Activated T-helper 1 cell treated with anti-CD3 and anti-CD28 coated beads, Interleukin-12 subunit alpha, Interleukin-12 subunit beta, Interleukin-2, Interleukin-4 antibody, amounts not matched to agents 30 ng/mL and 10 ng/mL and 1 ng/mL, durations not matched to agents 14 hours and 24 hours and 36 hours (primary cell): ENCODE measurements at regions of chr14 and their contacts with region 1.

Region 1: DNA sequence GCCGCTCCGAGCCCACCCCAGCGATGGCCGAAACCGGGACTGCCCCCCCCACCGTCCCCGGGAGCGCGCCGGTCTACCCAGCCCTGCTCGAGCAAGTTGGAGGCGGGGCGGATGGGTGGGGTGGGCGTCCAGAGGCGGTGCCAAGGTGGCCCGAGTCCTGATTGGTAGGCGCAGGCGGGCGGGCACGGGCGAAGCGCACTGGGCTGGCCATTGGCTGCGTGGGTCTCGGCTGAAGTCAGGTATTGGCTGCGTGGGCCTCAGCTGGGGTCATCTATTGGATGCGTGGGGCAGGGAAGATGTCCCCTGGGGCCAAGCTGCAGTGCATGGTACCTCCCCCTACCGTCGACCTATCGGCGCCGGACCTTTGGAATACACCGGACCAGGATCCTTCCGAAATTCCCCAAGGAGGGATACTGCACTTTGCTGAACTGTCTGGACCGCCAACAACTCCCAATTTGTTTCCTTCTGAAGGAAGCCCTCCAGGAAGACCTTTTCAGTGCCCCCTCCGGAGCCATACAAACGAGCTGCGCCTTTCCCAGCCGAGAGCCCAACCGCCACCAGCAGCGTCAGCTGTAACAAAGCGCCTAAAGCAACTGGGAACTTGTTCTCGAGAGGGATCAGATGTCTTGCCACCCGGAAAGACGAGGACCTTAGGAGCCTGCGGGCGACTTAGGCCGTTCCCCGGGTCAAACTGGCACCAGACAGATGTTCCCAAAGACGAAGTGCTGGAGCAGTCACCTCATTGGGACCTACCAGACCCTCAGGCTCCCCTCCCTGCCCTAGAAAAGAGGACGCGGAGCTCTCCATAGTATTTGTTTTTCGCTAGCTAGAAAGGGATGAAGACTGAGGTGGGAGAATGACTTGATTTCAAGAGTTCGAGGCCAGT is at the start of gene HOMEZ:
- DNase-seq: peak; percentile 98
- H3K4me3 Mint-ChIP-seq: peak within 1 kb of the TSS; percentile 99
- H3K27ac Mint-ChIP-seq: peak within 1 kb of the TSS; percentile 95
- H3K4me1 Mint-ChIP-seq: peaks cover 26% of the 10 kb centered on the region
- H3K27me3 Mint-ChIP-seq: no peaks in the 10 kb centered on the region
- total RNA-seq, gene HOMEZ: 10.9 and 12.2 TPM in 2 replicates

Region 2: DNA sequence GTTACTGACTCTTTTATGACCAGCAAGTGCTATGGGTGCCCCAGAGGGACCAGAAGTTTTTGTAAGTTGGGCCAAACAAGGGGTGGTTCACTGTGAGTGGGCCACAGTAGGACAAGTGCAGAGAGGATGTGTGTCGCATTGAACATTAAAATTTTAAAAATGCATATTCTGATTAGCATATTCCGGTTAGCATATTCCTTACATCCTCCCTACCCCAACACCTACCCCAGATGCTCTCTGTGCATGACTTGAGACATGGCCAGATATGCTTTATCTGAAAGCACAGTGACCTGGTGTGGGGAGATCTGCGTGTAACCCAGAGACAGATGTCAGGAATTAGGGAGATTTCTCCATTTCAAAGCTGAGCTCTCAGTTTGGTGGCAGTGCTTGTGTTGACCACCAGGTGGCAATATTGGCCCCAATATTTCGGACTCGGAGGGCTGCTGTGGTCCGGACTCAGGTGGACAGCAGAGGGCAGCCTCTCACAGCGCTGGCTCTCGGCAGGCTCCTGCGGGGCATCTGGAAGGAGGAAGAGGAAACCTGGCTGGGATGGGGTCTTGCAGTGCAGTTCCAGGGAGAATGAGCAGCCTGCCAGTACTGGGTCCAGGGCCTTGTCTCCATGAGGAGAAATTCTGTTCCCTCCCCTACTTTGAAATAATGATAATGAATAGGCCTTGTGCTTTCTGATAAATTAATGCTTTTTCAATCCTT is 165.6 kb before region 1 on chr14:
- intact Hi-C with region 1: loop called (anchors 2 kb)
- DNase-seq: peak; percentile 73
- H3K4me3 Mint-ChIP-seq: peak overlapping the region; percentile 38
- H3K27ac Mint-ChIP-seq: peak overlapping the region; percentile 90
- H3K4me1 Mint-ChIP-seq: peaks cover 31% of the 10 kb centered on the region
- H3K27me3 Mint-ChIP-seq: peaks cover 10% of the 10 kb centered on the region

Region 3: DNA sequence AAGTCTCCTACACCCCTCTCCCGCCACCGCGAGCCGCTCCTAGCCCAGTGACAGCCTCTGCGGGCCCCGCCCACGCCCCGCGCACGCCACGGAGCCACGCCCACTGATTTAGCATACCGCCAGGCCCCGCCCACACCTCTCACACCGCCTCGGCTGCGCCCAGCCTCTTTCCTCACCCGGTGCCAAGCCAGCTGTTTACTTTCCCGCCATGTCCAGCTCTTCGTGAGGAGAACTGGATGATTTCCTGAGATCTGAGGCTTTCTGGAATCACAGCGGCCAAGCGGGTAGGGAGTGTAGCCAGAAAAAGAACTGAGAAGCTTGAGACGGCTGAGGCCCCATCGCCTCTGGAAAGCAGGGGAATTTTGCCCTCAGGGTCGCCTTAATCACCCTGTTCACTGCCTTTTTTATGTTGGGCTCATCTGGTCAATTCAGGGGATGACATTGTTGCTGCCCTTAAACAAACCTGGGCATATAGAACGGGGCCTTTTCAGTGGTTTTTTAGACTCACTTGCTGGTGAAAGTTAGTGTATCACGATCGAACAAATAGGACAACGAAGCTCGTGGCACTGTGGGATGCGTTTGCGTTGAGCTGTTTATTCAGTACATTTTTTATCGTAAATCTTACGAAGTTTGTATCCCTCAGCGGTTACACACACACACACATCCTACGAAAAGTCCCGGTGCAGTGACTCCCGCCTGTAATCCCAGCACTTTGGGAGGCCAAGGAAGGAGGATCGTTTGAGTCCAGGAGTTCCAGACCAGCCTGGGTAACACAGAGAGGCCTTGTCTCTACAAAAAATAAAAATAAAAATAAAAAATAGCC is 48.3 kb before region 1 on chr14 and contains the start of gene RNF212B:
- intact Hi-C with region 1: loop called (anchors 2 kb)
- DNase-seq: peak; percentile 73
- H3K4me3 Mint-ChIP-seq: peak within 1 kb of the TSS; percentile 37
- H3K27ac Mint-ChIP-seq: no peak within 1 kb of the TSS
- H3K4me1 Mint-ChIP-seq: peaks cover 7% of the 10 kb centered on the region
- H3K27me3 Mint-ChIP-seq: peaks cover 19% of the 10 kb centered on the region
- total RNA-seq, gene RNF212B: not detected in 2 replicates

Region 4: DNA sequence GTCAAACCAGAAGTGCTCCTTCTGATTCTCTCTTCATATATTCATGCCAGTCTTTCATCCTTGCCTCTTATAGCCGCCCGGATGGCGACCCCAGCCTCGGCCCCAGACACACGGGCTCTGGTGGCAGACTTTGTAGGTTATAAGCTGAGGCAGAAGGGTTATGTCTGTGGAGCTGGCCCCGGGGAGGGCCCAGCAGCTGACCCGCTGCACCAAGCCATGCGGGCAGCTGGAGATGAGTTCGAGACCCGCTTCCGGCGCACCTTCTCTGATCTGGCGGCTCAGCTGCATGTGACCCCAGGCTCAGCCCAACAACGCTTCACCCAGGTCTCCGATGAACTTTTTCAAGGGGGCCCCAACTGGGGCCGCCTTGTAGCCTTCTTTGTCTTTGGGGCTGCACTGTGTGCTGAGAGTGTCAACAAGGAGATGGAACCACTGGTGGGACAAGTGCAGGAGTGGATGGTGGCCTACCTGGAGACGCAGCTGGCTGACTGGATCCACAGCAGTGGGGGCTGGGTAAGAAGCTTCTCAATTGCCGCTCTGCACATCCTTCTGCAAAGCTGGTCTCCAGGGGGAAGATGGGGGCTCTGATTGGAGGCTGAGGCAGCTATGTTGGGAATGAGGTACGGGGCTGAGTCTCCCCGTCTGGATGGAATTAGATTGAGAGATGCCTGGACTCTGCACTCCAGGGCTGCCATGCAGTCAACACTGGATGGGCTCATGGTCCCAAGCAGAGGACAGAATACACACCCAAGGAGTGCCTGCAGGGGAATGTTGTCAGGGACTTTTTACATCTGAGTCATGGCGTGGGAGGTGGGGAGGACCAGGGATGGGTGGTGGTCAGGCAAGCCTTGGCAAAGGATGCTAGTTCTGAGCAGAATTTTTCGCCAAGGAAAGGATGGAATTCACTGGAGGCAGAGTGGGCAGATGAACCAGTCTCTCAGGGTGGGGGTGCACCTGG is 21.7 kb after region 1 on chr14:
- intact Hi-C with region 1: no loop called
- DNase-seq: no peak
- H3K4me3 Mint-ChIP-seq: peak overlapping the region; percentile 79
- H3K27ac Mint-ChIP-seq: no peak overlapping the region
- H3K4me1 Mint-ChIP-seq: peaks cover 26% of the 10 kb centered on the region
- H3K27me3 Mint-ChIP-seq: peaks cover 7% of the 10 kb centered on the region

Region 5: DNA sequence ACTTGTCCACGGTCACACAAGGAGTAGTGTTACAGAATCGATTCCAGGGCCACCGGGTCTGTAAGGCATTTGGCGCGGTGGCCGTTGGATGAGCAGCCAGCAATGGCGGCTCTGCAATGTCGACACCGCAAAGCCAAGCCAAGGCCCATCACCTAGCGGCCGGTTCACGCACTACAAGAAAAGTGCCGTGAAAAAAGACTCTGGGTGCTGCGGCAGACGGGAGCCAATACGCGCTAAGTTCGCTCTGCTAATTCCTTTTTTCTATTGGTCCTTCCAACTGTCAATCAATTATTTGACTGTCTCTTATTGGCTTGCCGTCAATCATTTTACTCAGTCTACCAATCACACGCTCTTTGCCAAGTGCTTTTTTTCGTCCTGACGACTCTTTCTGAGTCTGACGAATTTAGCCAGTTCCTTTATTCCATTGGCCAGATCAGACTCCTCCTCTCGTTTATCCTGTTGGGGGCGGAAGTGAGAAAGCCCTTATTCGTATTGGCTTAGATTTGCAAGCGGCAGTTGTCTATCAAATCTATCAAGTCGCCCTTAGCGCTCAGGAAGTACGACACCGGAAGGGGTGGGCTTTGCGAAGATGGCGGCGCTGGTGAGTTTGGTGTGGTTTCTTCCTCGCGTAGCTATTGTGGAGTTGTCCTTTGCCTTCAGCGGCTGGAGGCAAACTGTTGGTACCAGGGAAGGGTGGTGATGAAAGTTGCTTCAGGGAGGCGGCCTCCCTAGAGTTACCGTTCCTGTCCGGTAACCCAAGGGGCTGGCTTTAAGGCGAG is 183.1 kb after region 1 on chr14 and contains the start of gene NGDN:
- intact Hi-C with region 1: loop called (anchors 1 kb)
- DNase-seq: peak; percentile 89
- H3K4me3 Mint-ChIP-seq: no peak within 1 kb of the TSS
- H3K27ac Mint-ChIP-seq: peak within 1 kb of the TSS; percentile 45
- H3K4me1 Mint-ChIP-seq: peaks cover 11% of the 10 kb centered on the region
- H3K27me3 Mint-ChIP-seq: peaks cover 2% of the 10 kb centered on the region
- total RNA-seq, gene NGDN: 80.1 and 84.5 TPM in 2 replicates

Region 6: DNA sequence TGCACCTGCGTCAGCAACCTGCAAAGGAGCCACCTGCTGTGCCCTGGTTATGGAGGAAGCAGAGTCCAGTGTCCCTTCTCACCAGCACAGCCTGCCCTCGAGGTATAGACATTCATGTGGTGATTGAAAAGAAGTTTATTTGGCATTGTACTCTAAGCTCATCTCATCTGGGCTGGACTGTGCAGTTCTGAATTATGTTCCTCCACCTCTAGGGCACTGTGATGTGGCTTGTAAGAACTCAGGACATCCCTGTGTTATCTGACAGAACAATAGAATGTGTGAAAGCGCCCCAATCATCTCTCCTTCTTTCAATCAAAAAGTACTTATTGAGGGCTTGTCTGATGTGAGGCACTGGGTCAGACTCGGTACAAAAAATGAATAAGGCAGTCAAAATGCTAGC is 490.0 kb after region 1 on chr14:
- intact Hi-C with region 1: no loop called
- DNase-seq: no peak
- H3K4me3 Mint-ChIP-seq: no peak overlapping the region
- H3K27ac Mint-ChIP-seq: no peak overlapping the region
- H3K4me1 Mint-ChIP-seq: no peaks in the 10 kb centered on the region
- H3K27me3 Mint-ChIP-seq: peaks cover 10% of the 10 kb centered on the region